ENCODE measurements at regions of chr17 and their contacts with region 1.

Region 1: GRCh38 chr17:30600049-30600829 is 123.0 kb downstream of the GOSR1 start:
- DNase-seq: peak; percentile 29 to 87
- H3K4me3 ChIP-seq: peak overlapping the region; percentile 71 to 99
- H3K27ac ChIP-seq: peak overlapping the region; percentile 88 to 98
- H3K4me1 ChIP-seq: peaks cover 0 to 6% of the 10 kb centered on the region in 2 donors
- H3K27me3 ChIP-seq: no peaks in the 10 kb centered on the region
- CTCF ChIP-seq: peak; percentile 38 to 47 (median 42)

Region 2: DNA sequence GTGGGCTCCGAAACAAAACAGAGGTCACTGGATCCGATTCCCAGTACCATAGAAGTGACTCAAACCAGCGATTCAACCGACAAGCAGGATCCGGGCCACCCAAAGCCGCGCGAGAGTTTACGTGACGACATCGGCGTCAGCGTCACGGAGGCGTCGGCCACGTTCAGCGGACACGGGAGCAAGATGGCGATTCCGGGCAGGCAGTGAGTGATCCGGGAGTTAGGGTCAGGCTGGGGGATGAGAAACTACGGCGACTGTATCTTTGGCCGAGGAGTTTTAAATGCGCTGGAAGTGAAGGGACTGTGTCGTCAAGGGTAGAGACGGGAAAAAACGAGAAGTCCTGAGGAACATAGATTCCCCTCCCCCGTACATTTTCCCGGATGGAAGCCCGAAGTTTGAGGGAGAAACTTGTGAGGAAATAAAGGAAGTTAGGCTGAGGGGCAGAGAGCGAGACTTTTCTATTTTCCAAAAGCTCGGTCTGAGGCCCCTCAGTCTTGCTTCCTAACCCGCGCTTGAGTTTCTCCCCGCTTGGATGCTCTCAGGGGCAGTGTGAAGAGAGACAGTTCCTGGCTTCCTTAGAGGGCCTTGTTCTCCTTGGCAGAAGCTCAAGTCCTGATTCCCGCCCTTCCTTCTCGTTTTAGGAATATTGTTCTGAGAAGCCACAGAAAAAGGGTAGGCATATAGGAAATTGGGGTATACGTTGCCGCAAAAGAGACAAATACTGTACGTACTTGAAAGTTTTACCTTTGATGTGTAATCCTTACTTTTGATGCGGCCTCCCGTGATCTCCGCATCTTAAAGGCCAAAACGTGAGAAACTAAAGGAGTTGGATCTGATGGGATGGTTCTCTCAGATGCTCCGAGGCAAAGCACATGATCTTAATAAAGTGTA is 483.3 kb before region 1 on chr17 and contains the start of gene NSRP1:
- intact Hi-C with region 1: loop called (anchors 5 kb)
- DNase-seq: peak; percentile 82 to 98
- H3K4me3 ChIP-seq: peak within 1 kb of the TSS; percentile 65 to 71
- H3K27ac ChIP-seq: peak within 1 kb of the TSS; percentile 92 to 95
- H3K4me1 ChIP-seq: peaks cover 0 to 12% of the 10 kb centered on the region in 2 donors
- H3K27me3 ChIP-seq: no peaks in the 10 kb centered on the region
- CTCF ChIP-seq: no peak
- total RNA-seq, gene NSRP1: 5.1 TPM

Region 3: DNA sequence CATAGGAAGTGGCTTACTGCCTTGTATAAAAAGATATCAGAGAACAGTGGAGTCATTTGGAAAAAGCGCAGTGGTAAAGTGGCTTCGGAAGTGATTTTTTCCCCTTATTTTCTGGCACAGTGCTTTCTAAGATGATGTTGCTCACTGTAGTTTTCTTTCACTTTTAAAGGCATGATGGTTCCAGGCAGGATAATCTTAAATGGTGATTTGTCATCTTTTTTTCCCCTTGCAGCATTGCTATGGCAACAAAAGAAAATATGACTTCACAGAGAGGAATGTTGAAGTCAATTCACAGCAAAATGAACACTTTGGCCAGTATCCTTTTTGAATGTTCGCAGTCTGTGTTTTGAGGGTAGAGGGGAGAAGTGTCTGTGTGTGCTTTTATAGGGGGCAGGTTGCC is 80.5 kb before region 1 on chr17:
- intact Hi-C with region 1: loop called (anchors 1 kb)
- DNase-seq: no peak
- H3K4me3 ChIP-seq: peak overlapping the region in 1 of 2 donors; percentile 28
- H3K27ac ChIP-seq: peak overlapping the region; percentile 13 to 68
- H3K4me1 ChIP-seq: peaks cover 3 to 8% of the 10 kb centered on the region in 2 donors
- H3K27me3 ChIP-seq: no peaks in the 10 kb centered on the region
- CTCF ChIP-seq: no peak

Region 4: GRCh38 chr17:30950669-30951399 is 350.6 kb after region 1 on chr17:
- intact Hi-C with region 1: no loop called
- DNase-seq: peak; percentile 50 to 80
- H3K4me3 ChIP-seq: no peak overlapping the region
- H3K27ac ChIP-seq: no peak overlapping the region
- H3K4me1 ChIP-seq: no peaks in the 10 kb centered on the region
- H3K27me3 ChIP-seq: no peaks in the 10 kb centered on the region
- CTCF ChIP-seq: no peak

Region 5: GRCh38 chr17:31394544-31394943 is 794.3 kb after region 1 on chr17:
- intact Hi-C with region 1: no loop called
- DNase-seq: peak in 1 of 2 donors; percentile 62
- H3K4me3 ChIP-seq: no peak overlapping the region
- H3K27ac ChIP-seq: no peak overlapping the region
- H3K4me1 ChIP-seq: peaks cover 4 to 6% of the 10 kb centered on the region in 2 donors
- H3K27me3 ChIP-seq: peaks cover 7% of the 10 kb centered on the region
- CTCF ChIP-seq: no peak